HCT116 (cell line): ENCODE measurements at regions of chr1 and their contacts with region 1.

Region 1: DNA sequence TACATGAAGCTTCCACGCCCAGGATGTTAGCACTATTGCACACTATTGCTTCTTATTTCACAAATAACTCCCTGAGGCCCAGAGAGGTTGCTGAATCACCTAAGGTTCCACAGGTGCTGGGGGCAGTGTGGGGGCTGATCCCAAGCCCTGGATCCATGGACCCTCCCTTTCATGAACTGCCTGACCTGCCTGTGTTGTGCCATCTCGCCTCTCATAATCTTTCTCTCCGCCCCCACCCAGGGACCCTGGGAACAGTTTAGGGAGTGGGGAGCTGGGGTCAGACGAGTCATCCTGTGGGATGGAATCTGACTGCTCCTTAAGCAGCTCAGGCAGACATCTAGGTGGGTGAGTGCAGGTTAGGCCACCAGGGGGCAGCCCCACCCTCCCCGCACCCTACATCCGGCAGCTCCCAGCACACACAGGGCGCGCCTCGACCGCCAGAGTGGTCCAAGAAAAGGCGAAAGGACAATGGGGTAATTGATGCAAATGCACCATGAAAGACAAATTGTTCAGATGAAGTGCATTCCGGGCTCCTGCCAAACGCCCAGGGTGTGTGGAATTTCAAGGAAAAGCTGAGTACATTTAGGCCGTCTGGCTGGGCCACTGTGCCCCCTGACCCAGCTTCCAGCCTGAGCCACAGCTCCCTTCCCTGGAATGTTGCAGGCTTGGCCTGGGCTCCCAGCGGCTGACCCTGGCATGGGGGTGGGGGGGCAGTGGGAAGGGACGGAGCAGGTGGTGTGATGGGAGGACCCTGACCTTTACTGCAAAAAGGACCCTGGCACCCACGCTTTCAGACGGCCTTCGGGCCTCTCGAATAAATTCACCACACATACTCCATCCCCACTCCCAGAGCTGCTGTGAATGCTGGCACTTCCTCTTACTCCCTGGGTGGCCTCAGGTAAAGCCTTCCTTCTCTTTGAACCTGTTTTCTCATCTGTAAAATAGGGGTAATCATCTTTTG is 20.8 kb downstream of the PHLDA3 start:
- DNase-seq: peak; percentile 57
- ATAC-seq: peak; percentile 100
- H3K4me3 ChIP-seq: no peak overlapping the region
- H3K27ac ChIP-seq: no peak overlapping the region
- H3K4me1 ChIP-seq: peaks cover 7 to 19% of the 10 kb centered on the region in 2 experiments; a peak in 3 of 4 replicates
- H3K27me3 ChIP-seq: no peaks in the 10 kb centered on the region
- CTCF ChIP-seq: peak; percentile 89 to 95 (median 94)
- POLR2A ChIP-seq: no peak
- RAD21 ChIP-seq: peak; percentile 91

Region 2: DNA sequence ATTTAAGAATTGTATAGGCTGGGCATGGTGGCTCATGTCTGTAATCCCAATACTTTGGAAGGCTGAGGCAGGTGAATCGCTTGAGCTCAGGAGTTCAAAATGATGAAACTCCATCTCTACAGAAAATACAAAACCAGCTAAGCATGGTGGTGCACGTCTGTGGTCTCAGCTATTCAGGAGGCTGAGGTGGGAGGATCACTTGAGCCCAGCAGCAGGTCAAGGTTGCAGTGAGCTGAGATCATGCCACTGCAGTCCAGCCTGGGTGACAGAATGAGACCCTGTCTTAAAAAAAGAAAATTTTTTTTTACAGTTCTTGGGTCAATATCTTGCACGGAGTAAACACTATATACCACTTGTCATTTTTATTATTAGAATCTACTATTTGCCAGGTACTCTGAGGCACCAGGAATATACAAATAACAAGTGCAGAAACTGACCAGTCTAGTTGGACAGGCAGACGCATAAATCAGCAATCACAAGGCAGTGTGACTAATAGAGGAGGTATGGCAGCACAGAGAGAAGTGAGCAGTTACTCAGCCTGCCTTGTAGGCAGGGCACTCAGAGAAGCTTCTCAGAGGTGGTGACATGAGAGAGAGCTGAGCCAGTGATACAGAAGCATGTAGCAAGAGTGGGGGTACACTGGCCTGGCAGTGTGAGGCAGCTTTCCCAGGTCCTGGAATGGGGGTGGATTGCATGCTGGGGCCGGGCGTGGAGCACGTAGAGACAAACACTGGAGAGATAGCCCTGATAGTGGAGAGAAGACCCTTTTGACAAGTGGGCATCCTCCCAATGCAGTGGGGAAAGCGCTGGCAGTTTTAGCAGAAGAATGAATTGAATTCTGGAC is 12.8 kb after region 1 on chr1:
- CTCF ChIA-PET with region 1: interaction called, 35 read pairs
- POLR2A ChIA-PET with region 1: interaction called, 6 read pairs
- RAD21 ChIA-PET with region 1: interaction called, 4 read pairs
- intact Hi-C with region 1: no loop called
- DNase-seq: peak; percentile 86
- ATAC-seq: peak; percentile 85
- H3K4me3 ChIP-seq: peak overlapping the region; percentile 25 to 51
- H3K27ac ChIP-seq: peak overlapping the region; percentile 95
- H3K4me1 ChIP-seq: peaks cover 42 to 75% of the 10 kb centered on the region in 2 experiments
- H3K27me3 ChIP-seq: no peaks in the 10 kb centered on the region
- CTCF ChIP-seq: no peak
- POLR2A ChIP-seq: no peak
- RAD21 ChIP-seq: no peak